ENCODE measurements at regions of chr6 and their contacts with region 1.

Region 1: GRCh38 chr6:43228951-43229802 is at the start of gene DNPH1:
- DNase-seq: no peak
- H3K4me3 ChIP-seq: peak within 1 kb of the TSS; percentile 49
- H3K27me3 ChIP-seq: peaks cover 2% of the 10 kb centered on the region; the same call in 1 of the 2 replicates
- CTCF ChIP-seq: peak; percentile 47
- polyA plus RNA-seq, gene DNPH1: 48.6 and 63.9 TPM in 2 replicates

Region 2: GRCh38 chr6:43013843-43014433 is 215.2 kb before region 1 on chr6 and contains the starts of genes KLHDC3 and MEA1:
- CTCF ChIA-PET with region 1: interaction called, 8 read pairs
- POLR2A ChIA-PET with region 1: interaction called, 20 read pairs
- DNase-seq: peak; percentile 100
- H3K4me3 ChIP-seq: peak within 1 kb of the TSS; percentile 97
- H3K27me3 ChIP-seq: no peaks in the 10 kb centered on the region
- CTCF ChIP-seq: no peak
- polyA plus RNA-seq, gene KLHDC3: 56.0 and 102 TPM in 2 replicates
- polyA plus RNA-seq, gene MEA1: 107 and 121 TPM in 2 replicates

Region 3: DNA sequence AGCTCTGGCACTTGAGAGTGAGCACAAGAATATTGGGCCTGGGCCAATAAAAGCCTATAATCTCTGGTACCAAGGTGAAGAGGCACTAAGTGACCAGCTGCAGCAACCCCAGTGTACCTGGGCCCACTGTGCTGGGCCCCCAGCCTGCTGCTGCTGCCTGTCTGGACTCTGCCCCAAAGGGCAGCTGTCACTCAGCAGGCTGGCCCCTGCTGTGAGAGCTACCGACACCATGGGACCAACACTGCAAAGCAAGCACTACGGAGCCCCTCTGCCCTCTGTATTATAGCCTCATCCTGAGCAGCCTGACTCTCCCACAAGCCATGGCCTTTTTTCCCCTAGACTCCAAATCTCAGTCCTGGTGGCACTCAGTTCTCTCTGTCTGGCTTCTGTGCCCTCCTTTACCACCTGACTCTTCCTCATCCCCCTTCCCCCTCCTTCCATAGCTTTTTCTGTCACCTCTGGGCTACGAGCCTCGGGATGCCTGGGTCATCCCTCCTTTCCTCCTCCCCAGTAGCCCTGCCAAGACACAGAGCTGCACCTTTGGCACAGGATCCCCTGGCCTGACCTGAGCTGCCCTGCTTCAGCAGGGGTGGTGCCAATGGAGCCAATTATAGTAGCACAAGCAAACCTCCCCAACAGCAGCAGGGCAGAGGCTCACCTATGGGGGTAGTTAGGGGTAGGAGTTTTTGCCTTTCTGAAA is 193.5 kb before region 1 on chr6:
- CTCF ChIA-PET with region 1: no interaction called
- POLR2A ChIA-PET with region 1: no interaction called
- DNase-seq: no peak
- H3K4me3 ChIP-seq: no peak overlapping the region
- H3K27me3 ChIP-seq: no peaks in the 10 kb centered on the region
- CTCF ChIP-seq: no peak

Region 4: GRCh38 chr6:43163899-43164298 is 65.3 kb before region 1 on chr6:
- CTCF ChIA-PET with region 1: no interaction called
- POLR2A ChIA-PET with region 1: no interaction called
- DNase-seq: no peak
- H3K4me3 ChIP-seq: no peak overlapping the region
- H3K27me3 ChIP-seq: no peaks in the 10 kb centered on the region
- CTCF ChIP-seq: no peak

Region 5: GRCh38 chr6:43211955-43212354 is 17.2 kb before region 1 on chr6:
- CTCF ChIA-PET with region 1: interaction called, 15 read pairs
- POLR2A ChIA-PET with region 1: no interaction called
- DNase-seq: no peak
- H3K4me3 ChIP-seq: no peak overlapping the region
- H3K27me3 ChIP-seq: no peaks in the 10 kb centered on the region
- CTCF ChIP-seq: no peak

Region 6: DNA sequence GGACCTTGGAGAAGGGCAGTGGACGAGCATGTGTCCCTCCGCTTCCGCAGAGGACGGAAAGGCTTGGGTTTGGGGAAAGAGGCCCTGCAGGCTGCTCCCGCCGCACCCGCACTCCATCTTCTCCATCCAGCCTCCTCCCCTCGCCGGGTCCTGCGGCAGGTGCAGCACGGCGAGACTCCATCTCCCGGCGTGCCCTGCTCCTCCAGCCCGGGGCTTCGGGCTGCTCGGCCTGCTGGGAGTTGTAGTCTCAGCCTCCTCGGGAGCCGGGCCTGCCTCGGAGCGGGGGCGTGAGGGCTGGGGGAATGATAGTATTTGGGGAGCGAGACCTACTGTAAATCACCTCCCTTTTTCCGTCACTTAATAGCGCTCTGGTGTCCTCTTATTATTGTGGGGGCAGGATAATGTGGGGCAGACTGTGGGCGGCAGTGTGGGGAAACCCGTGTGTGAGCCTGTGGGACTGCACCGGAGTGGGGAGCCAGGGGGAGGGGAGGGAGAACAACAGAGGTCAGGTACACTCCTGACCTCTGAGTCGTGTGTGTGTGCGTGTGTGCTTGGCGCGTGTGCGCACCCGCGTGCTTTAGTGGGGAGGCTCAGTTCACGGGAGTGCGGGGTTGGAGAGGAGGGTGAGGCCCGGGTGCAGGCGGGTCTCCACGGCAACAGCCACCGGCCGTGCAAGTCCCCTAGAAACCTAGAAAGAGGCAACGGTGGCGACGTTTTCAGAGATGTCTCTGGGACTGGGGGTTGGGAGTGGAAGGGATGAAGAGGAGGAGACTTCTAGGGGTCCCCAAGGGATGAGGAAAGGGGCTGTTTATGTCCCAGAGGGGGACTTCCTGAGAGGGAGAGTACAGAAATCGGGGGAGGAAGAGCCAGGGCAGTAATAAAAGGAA is 18.2 kb after region 1 on chr6:
- CTCF ChIA-PET with region 1: interaction called, 11 read pairs
- POLR2A ChIA-PET with region 1: no interaction called
- DNase-seq: no peak
- H3K4me3 ChIP-seq: peak overlapping the region; percentile 39
- H3K27me3 ChIP-seq: peaks cover 54% of the 10 kb centered on the region
- CTCF ChIP-seq: no peak

Region 7: GRCh38 chr6:43263314-43264178 is 34.4 kb after region 1 on chr6:
- CTCF ChIA-PET with region 1: interaction called, 11 read pairs
- POLR2A ChIA-PET with region 1: no interaction called
- DNase-seq: no peak
- H3K4me3 ChIP-seq: no peak overlapping the region
- H3K27me3 ChIP-seq: peaks cover 16% of the 10 kb centered on the region
- CTCF ChIP-seq: peak; percentile 88